HEK293 (cell line): ENCODE measurements at regions of chr18 and their contacts with region 1.

Region 1: DNA sequence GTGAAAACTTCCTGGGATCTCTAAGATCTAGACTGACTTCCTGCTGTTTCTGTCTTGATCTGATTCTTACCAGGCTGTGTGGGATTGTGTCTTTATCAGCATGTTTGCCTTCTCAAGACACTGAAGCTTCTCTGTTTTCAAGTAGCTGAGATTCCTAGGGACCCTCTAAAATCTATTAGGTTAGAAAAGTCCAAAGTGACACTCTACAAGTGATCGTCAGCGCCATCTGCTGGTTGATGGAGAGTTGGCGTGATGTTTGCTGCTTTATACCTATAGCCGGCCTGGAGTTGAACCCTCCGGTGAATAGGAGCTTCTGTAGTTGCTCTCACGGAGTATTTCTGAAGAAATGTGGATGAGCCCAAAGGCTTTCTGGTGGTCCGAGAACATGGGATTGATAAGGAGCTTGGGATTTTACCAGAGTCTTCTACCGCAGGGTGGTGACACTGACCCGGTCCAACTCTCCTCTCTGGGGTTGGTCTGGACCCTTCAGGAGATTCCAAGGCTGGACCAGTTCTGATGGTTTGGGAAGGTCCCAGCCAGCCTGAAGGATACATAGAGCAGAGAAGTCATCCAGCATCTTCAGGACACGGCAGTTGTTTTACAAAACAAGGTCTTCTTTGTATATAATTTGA is 96.0 kb upstream of the TTC39C start:
- H3K4me3 ChIP-seq: no peak overlapping the region
- H3K27ac ChIP-seq: no peak overlapping the region
- H3K4me1 ChIP-seq: no peaks in the 10 kb centered on the region
- CTCF ChIP-seq: no peak

Region 2: DNA sequence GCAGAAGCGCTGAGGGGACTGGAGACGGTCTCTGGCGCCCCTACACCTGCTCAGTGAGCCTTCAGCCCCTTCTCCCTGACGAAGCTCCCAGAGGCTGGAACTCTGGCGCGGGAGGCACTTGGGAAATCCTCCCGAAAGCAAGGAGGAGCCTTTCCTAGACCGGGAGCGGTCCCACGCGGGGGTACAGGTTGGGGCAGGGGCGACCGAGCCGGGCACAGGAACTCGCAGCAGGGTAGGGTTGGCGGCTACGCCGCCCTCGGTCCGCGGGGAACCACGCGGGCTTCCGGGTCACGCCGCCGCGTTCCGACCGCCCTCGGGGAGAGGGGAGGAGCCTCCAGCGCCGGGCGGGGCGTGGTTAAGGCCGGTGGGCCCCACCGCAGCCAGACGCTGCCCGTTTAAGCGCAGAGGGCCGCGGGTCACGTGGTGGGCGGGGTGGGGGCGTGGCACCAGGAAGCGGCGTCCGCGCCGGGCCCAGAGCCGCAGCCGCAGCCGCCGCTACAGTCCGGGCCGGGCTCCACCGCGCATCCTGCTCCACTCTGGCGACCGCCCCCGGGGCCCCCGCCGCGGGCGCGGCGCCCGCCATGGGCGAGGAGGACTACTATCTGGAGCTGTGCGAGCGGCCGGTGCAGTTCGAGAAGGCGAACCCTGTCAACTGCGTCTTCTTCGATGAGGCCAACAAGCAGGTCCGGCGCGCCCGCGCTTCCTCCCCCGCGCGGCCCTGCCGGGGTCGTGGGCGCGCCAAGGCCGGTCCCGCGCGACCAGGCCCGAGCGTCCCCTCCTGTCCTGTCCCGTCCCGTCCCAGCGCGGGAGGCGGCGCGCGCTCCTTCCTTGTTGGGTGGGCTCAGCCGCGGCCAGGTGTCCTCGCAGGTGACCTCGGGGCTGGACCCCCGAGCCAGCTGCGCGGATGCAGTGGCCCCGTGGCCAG is 415.2 kb before region 1 on chr18 and contains the start of gene RMC1:
- CTCF ChIA-PET with region 1: interaction called, 15 read pairs
- POLR2A ChIA-PET with region 1: no interaction called
- H3K4me3 ChIP-seq: peak within 1 kb of the TSS; percentile 86
- H3K27ac ChIP-seq: peak within 1 kb of the TSS; percentile 48; the same call in 1 of the 2 replicates
- H3K4me1 ChIP-seq: no peaks in the 10 kb centered on the region
- CTCF ChIP-seq: peak; percentile 82

Region 3: DNA sequence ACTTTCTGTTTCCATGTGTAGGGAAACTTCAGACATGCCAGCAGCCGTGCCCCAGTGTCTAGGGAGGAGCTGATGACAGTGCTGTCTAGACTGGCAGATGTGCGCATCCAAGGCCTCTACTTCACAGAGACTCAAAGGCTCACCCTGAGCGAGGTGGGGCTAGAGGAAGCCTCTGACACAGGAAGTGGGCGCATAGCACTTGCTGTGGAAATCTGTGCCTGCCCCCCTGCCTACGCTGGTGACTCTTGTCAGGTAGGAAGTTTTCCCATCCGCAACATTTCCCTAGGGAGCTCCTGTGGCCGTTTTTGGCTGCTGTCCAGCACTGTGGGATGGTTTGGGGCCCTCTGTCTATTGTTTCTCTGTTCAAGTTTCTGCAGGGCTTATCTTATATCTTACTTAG is 47.1 kb before region 1 on chr18:
- CTCF ChIA-PET with region 1: interaction called, 10 read pairs
- POLR2A ChIA-PET with region 1: no interaction called
- H3K4me3 ChIP-seq: no peak overlapping the region
- H3K27ac ChIP-seq: no peak overlapping the region; the same call in 1 of the 2 replicates
- H3K4me1 ChIP-seq: peaks cover 31% of the 10 kb centered on the region
- CTCF ChIP-seq: no peak

Region 4: DNA sequence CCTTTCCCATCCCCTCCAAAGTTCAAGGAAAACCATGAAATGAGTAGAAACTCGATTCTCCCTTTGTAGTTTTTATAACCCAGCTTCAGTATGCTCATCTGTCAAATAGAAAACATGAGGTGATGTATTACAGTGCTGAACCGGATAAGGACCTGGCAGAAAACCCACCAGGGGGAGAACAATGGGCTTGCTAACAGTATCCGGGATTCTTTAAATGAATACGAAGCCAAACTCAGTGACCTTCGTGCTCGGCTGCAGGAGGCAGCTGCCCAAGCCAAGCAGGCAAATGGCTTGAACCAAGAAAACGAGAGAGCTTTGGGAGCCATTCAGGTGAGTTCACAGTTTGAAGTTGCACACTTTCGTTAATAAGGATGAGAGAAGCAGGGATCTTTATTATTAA is 17.5 kb before region 1 on chr18:
- CTCF ChIA-PET with region 1: interaction called, 56 read pairs
- POLR2A ChIA-PET with region 1: no interaction called
- H3K4me3 ChIP-seq: no peak overlapping the region
- H3K27ac ChIP-seq: no peak overlapping the region
- H3K4me1 ChIP-seq: no peaks in the 10 kb centered on the region
- CTCF ChIP-seq: no peak

Region 5: DNA sequence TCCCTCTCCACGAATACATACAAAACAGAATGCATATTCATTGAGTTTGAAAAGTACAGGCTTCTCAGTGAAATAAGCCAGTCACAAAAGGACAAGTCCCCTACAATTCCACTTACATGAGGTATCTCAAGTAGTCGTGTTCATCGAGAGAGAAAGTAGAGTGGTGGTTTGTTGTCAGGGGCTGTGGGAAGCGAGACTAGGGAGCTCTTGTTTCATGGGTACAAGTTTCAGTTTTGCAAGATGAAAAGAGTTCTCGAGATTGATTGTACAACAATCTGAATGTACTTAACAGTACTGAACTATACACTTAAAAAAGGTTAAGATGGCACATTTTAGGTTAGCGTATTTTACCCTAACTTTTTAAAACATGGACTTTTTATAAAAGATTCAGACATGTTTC is 24.6 kb after region 1 on chr18:
- CTCF ChIA-PET with region 1: interaction called, 16 read pairs
- POLR2A ChIA-PET with region 1: no interaction called
- H3K4me3 ChIP-seq: no peak overlapping the region
- H3K27ac ChIP-seq: no peak overlapping the region
- H3K4me1 ChIP-seq: no peaks in the 10 kb centered on the region
- CTCF ChIP-seq: no peak

Region 6: DNA sequence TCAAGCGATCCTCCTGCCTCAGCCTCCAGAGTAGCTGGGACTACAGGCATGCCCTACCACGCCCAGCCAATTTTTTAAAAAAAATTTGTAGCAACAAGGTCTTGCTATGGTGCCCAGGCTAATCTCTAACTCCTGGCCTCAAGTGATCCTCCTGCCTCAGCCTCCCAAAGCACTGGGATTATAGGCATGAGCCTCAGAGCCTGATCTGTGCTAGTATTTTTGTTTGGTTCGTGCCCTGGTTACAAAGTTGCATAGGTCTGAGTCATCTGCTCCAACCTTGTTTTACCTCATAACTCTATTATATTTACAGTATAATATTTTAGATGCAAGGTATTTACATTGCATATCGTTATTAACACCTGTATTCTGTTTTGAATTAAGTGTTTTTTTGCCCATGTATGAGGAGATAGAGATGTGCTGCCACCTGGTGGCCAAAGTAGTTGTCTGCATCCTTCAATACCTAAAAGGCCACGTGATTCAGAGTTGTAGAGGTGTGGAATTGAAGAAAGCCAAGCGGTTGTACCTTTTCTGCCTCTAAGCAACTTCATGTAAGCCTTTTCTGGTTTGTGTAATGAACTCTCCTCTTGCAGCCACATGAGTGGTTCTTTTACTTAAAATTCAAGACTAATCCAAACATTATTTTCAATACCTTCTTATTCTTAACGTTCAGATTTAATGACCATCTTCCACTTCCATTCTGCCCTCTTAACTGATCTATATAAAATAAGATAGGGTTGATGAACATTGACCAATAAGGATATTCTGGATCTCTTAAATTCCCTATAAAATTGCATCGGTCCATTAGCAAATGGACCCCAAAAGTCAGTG is 200.4 kb after region 1 on chr18:
- CTCF ChIA-PET with region 1: interaction called, 14 read pairs
- POLR2A ChIA-PET with region 1: no interaction called
- H3K4me3 ChIP-seq: no peak overlapping the region
- H3K27ac ChIP-seq: no peak overlapping the region
- H3K4me1 ChIP-seq: no peaks in the 10 kb centered on the region
- CTCF ChIP-seq: peak; percentile 59; the same call in 1 of the 2 replicates

Region 7: GRCh38 chr18:25125680-25126079 is 1207.2 kb after region 1 on chr18:
- CTCF ChIA-PET with region 1: no interaction called
- POLR2A ChIA-PET with region 1: no interaction called
- H3K4me3 ChIP-seq: no peak overlapping the region
- H3K27ac ChIP-seq: no peak overlapping the region
- H3K4me1 ChIP-seq: no peaks in the 10 kb centered on the region
- CTCF ChIP-seq: no peak